Activated CD4-positive, alpha-beta memory T cell treated with anti-CD3 and anti-CD28 coated beads, Interleukin-2, amount 10 ng/mL, durations not matched to agents 7 days and 5 days (primary cell): ENCODE measurements at regions of chr2 and their contacts with region 1.

Region 1: DNA sequence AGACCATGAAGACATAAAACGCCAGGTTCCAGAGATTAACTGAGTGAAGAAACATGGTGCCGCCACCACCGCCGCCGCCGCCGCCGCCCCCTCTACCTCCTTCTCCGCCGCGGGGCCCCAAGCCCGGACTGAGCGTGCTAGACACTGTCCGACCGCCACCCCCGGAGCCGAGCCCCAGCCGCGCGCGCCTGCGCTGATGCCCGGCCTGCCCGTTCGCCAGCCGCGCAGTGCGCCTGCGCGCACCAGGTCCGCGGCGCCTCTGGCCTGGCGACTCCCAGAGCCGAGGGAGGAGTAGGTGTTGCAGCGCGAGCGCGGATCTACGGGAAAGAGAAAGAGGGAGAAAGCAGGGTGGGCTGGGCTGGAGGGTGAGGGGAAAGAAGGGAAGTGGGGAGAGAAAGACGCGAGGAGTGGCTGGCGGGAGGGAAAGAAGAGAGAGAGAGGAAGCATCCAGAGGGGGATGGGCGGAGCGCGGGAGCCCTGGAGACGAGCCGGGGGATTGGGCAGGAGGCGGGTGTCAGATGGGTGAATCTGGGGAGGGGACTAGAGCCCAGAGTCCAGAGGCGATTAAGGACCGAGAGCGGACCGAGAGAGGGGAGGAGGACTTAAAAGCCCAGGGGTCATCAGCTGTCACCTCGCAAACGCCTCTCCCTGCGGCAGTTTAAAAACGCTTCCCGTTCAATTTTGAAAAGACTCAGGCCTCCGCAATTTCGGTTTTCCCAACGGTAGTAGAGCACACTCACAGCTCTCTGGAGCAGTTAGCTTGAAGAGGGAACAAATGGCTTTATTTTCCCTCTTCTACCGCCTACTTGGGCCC is at the start of gene PGAP1:
- DNase-seq: peak; percentile 89
- H3K4me3 Mint-ChIP-seq: peak within 1 kb of the TSS; percentile 93
- H3K27ac Mint-ChIP-seq: peak within 1 kb of the TSS; percentile 99
- H3K4me1 Mint-ChIP-seq: peaks cover 37% of the 10 kb centered on the region
- H3K27me3 Mint-ChIP-seq: no peaks in the 10 kb centered on the region
- total RNA-seq, gene PGAP1: 53.6 to 63.6 TPM

Region 2: DNA sequence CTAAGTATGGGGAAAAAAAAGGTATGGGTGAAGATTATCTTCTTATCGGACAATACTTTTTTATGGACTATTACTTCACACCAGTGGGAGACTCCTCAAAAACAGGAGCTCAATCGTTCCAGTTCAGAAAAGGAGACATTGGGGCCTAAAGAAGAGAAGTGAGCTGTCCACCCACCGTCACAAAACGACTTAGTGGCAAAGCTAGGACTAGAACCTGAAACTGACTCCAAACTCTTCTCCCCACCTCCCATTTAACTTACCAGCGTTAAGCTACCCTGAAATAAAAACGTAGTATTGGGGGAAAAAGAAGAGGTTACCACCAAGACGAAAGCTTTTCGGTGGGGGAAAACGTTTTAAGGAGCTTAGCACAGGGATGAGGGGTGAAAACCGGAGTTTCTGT is 127.8 kb before region 1 on chr2:
- CTCF ChIA-PET with region 1: no interaction called
- POLR2A ChIA-PET with region 1: interaction called, 21 read pairs
- DNase-seq: no peak
- H3K4me3 Mint-ChIP-seq: peak overlapping the region; percentile 93
- H3K27ac Mint-ChIP-seq: peak overlapping the region; percentile 91
- H3K4me1 Mint-ChIP-seq: peaks cover 31% of the 10 kb centered on the region
- H3K27me3 Mint-ChIP-seq: no peaks in the 10 kb centered on the region

Region 3: GRCh38 chr2:196914867-196915460 is 11.8 kb before region 1 on chr2:
- CTCF ChIA-PET with region 1: interaction called, 18 read pairs
- POLR2A ChIA-PET with region 1: interaction called, 136 read pairs
- DNase-seq: no peak
- H3K4me3 Mint-ChIP-seq: peak overlapping the region; percentile 55
- H3K27ac Mint-ChIP-seq: peak overlapping the region; percentile 95
- H3K4me1 Mint-ChIP-seq: peaks cover 54% of the 10 kb centered on the region
- H3K27me3 Mint-ChIP-seq: no peaks in the 10 kb centered on the region

Region 4: GRCh38 chr2:196961889-196962288 is 35.1 kb after region 1 on chr2:
- CTCF ChIA-PET with region 1: no interaction called
- POLR2A ChIA-PET with region 1: interaction called, 29 read pairs
- DNase-seq: no peak
- H3K4me3 Mint-ChIP-seq: no peak overlapping the region
- H3K27ac Mint-ChIP-seq: peak overlapping the region; percentile 13
- H3K4me1 Mint-ChIP-seq: peaks cover 29% of the 10 kb centered on the region
- H3K27me3 Mint-ChIP-seq: no peaks in the 10 kb centered on the region

Region 5: GRCh38 chr2:196987649-196988364 is 61.0 kb after region 1 on chr2:
- CTCF ChIA-PET with region 1: no interaction called
- POLR2A ChIA-PET with region 1: interaction called, 45 read pairs
- DNase-seq: peak; percentile 47
- H3K4me3 Mint-ChIP-seq: peak overlapping the region; percentile 55
- H3K27ac Mint-ChIP-seq: peak overlapping the region; percentile 81
- H3K4me1 Mint-ChIP-seq: peaks cover 49% of the 10 kb centered on the region
- H3K27me3 Mint-ChIP-seq: no peaks in the 10 kb centered on the region